ENCODE measurements at regions of chr3 and their contacts with region 1.

Region 1: GRCh38 chr3:122383771-122384697 is at the start of gene FAM162A:
- DNase-seq: peak; percentile 89 to 97 (median 93)
- ATAC-seq: peak; percentile 94
- H3K4me3 ChIP-seq: peak within 1 kb of the TSS; percentile 79 to 91
- H3K4me3 Mint-ChIP-seq: peak within 1 kb of the TSS; percentile 94
- H3K27ac ChIP-seq: peak within 1 kb of the TSS; percentile 73 to 83
- H3K27ac Mint-ChIP-seq: peak within 1 kb of the TSS; percentile 94
- H3K4me1 ChIP-seq: peaks cover 18% of the 10 kb centered on the region
- H3K4me1 Mint-ChIP-seq: peaks cover 51% of the 10 kb centered on the region
- H3K27me3 ChIP-seq: no peaks in the 10 kb centered on the region
- H3K27me3 Mint-ChIP-seq: no peaks in the 10 kb centered on the region
- CTCF ChIP-seq: peak; percentile 66
- total RNA-seq, gene FAM162A: 36.9 to 38.2 TPM

Region 2: DNA sequence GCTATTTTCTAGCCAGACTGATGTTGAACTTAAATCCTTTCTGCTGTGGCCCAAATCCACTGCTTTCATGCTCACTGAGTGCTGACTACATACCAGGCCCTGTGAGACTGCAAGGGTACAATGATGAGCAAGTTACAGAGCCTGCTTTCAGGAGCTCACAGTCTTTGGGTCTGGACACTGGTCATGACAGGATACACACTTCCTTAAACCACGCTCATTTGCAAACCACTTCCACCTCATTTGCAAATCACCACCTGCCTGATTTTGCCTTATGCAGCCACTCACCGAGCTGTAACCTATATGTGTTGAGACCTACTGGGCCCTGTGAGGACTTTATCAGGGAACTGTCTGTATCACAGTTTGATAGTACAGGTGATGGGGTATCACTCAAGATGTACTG is 1984.7 kb before region 1 on chr3:
- CTCF ChIA-PET with region 1: no interaction called
- POLR2A ChIA-PET with region 1: no interaction called
- intact Hi-C with region 1: no loop called
- DNase-seq: no peak
- ATAC-seq: no peak
- H3K4me3 ChIP-seq: no peak overlapping the region
- H3K4me3 Mint-ChIP-seq: no peak overlapping the region
- H3K27ac ChIP-seq: no peak overlapping the region
- H3K27ac Mint-ChIP-seq: no peak overlapping the region
- H3K4me1 ChIP-seq: no peaks in the 10 kb centered on the region
- H3K4me1 Mint-ChIP-seq: no peaks in the 10 kb centered on the region
- H3K27me3 ChIP-seq: no peaks in the 10 kb centered on the region
- H3K27me3 Mint-ChIP-seq: no peaks in the 10 kb centered on the region
- CTCF ChIP-seq: no peak

Region 3: GRCh38 chr3:121660356-121661171 is 723.5 kb before region 1 on chr3 and contains the start of gene HCLS1:
- CTCF ChIA-PET with region 1: no interaction called
- POLR2A ChIA-PET with region 1: interaction called, 10 read pairs
- intact Hi-C with region 1: loop called (anchors 1 to 2 kb)
- DNase-seq: peak; percentile 52 to 90 (median 71)
- ATAC-seq: peak; percentile 83
- H3K4me3 ChIP-seq: peak within 1 kb of the TSS; percentile 58
- H3K4me3 Mint-ChIP-seq: peak within 1 kb of the TSS; percentile 92
- H3K27ac ChIP-seq: peak within 1 kb of the TSS; percentile 86 to 95
- H3K27ac Mint-ChIP-seq: peak within 1 kb of the TSS; percentile 99
- H3K4me1 ChIP-seq: peaks cover 43% of the 10 kb centered on the region
- H3K4me1 Mint-ChIP-seq: peaks cover 54% of the 10 kb centered on the region
- H3K27me3 ChIP-seq: no peaks in the 10 kb centered on the region
- H3K27me3 Mint-ChIP-seq: no peaks in the 10 kb centered on the region
- CTCF ChIP-seq: no peak
- total RNA-seq, gene HCLS1: 162 to 179 TPM

Region 4: DNA sequence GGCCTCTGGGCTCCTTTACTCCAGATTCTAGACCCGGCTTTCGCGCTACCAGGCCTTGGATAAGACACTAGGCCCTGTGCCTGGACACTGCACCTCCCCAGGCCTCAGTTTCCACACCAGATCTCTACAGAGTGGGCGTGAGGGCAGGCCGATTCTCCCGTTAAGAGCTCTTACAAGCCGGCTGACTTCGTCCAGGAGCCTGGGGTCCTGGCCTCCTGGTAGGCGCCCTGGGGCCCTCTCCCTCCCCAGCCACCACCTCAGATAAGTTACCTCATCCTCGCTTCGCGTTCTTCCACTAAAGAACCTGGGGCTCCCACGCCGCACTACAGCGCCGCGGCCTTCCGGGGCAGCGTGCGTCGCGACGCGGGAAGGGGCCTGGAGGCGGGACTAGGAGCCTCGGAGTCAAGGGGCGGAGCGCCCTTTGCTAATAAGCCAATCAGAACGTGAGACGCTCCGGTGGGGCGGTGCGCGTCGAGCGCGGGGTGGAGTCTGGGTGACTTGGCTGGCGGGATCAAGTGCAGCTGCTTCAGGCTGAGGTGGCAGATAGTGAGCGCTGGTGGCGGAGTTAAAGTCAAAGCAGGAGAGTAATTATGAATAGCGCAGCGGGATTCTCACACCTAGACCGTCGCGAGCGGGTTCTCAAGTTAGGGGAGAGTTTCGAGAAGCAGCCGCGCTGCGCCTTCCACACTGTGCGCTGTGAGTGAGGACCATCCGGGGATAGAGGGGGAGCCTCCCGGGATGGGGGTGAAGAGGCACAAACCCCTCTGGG is 549.2 kb before region 1 on chr3 and contains the starts of genes EAF2 and IQCB1:
- CTCF ChIA-PET with region 1: no interaction called
- POLR2A ChIA-PET with region 1: no interaction called
- intact Hi-C with region 1: loop called (anchors 2 to 10 kb)
- DNase-seq: peak; percentile 91 to 98 (median 95)
- ATAC-seq: peak; percentile 97
- H3K4me3 ChIP-seq: peak within 1 kb of the TSS; percentile 74 to 91
- H3K4me3 Mint-ChIP-seq: peak within 1 kb of the TSS; percentile 93
- H3K27ac ChIP-seq: peak within 1 kb of the TSS; percentile 82 to 87
- H3K27ac Mint-ChIP-seq: peak within 1 kb of the TSS; percentile 94
- H3K4me1 ChIP-seq: peaks cover 25% of the 10 kb centered on the region
- H3K4me1 Mint-ChIP-seq: peaks cover 53% of the 10 kb centered on the region
- H3K27me3 ChIP-seq: no peaks in the 10 kb centered on the region
- H3K27me3 Mint-ChIP-seq: no peaks in the 10 kb centered on the region
- CTCF ChIP-seq: no peak
- total RNA-seq, gene EAF2: 3.5 to 3.7 TPM
- total RNA-seq, gene IQCB1: 36.5 to 42.2 TPM

Region 5: DNA sequence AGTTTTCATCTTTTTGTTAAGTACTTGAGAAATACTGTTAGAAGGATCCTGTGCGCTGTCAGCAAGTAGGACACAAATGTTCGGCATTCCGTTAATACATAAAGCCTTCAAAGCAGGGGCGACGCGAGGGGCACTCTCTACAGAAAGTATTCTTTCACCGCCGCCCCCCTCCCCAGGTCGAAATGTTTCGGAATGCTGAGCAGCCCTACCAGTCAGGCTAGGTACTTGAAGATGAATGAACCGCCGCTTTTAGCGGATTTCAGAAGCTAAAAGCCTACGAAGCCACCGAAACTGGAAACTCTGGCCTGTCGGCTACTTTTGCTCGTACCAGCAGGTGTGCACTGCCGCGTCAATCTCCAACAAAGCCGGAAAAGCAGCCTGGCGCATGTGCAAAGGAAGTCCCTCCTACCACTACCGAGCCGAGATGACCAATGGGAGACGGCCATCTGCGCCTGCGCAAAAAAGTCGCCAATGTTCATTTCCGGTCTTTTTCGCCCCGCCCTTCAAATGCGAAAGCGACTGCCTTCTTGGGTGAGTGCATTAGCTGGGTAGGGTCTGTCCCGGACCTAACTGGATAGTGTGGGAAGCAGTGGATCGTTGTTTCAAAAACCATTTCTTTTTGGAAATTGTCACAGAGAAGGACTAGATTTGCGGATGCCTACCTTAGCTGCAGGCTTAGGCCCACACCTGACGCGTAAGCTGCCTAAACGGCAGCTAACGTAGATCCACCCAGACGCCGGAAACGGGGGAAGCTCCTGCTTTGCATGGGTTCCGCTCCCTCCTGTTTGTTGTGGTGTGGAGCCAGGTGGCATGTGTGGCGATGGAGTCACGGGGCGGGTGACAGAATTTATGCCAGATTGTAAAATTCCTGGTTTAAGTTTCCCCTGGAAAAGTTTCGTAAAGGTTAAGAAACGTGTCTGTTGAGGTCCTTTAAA is 32.0 kb after region 1 on chr3 and contains the start of gene WDR5B:
- CTCF ChIA-PET with region 1: interaction called, 8 read pairs
- POLR2A ChIA-PET with region 1: interaction called, 54 read pairs
- intact Hi-C with region 1: loop called (anchors 1 kb)
- DNase-seq: peak; percentile 97 to 99 (median 98)
- ATAC-seq: peak; percentile 88
- H3K4me3 ChIP-seq: peak within 1 kb of the TSS; percentile 71 to 76
- H3K4me3 Mint-ChIP-seq: peak within 1 kb of the TSS; percentile 97
- H3K27ac ChIP-seq: peak within 1 kb of the TSS; percentile 91 to 94
- H3K27ac Mint-ChIP-seq: peak within 1 kb of the TSS; percentile 100
- H3K4me1 ChIP-seq: peaks cover 26% of the 10 kb centered on the region
- H3K4me1 Mint-ChIP-seq: peaks cover 58% of the 10 kb centered on the region
- H3K27me3 ChIP-seq: no peaks in the 10 kb centered on the region
- H3K27me3 Mint-ChIP-seq: no peaks in the 10 kb centered on the region
- CTCF ChIP-seq: no peak
- total RNA-seq, gene WDR5B: 1.9 to 2.7 TPM

Region 6: DNA sequence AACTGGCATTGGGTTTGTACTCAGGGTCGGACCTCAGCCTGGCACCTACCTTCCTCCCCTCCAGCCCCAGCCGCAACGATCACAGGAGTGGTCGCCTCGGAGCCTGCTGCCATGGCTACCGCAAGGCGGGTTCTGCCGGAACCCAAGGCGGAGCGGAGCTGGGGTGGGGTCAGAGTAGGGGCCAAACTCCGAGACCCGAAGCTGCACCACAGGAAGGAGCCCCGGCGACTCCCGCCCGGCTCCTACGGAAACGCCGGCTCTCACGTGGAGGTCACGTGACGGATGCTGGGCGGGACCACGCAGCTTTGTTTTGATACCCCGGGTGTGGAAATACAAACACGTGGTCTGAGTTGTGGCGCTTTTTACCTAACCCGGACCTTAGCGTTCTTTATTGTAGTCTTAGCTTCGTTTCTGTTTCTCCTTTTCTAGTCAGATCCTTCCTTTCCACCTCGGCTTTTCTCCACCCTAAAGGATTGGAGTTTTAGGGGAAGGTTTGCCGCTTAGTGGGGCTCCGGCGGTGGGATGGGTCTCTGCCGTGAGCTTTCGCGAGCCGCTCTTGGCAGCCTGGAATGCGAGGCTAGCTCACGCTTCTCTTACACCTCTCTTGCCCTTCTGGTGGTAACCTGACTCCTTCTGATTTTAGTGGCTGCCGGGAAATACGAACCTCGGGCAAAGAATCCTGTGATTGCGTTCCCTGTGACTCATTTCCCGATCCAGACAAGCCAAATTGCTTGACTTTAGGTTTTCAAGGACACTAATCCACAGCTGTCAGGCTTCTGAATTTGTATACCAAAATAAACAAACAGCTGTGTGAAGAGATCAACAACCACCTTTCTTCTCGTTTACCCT is 409.8 kb after region 1 on chr3 and contains the start of gene HSPBAP1:
- CTCF ChIA-PET with region 1: no interaction called
- POLR2A ChIA-PET with region 1: interaction called, 10 read pairs
- intact Hi-C with region 1: loop called (anchors 1 to 5 kb)
- DNase-seq: peak; percentile 72 to 95 (median 90)
- ATAC-seq: peak; percentile 67
- H3K4me3 ChIP-seq: peak within 1 kb of the TSS; percentile 78 to 81
- H3K4me3 Mint-ChIP-seq: peak within 1 kb of the TSS; percentile 91
- H3K27ac ChIP-seq: peak within 1 kb of the TSS; percentile 77 to 91
- H3K27ac Mint-ChIP-seq: no peak within 1 kb of the TSS
- H3K4me1 ChIP-seq: peaks cover 28% of the 10 kb centered on the region
- H3K4me1 Mint-ChIP-seq: peaks cover 38% of the 10 kb centered on the region
- H3K27me3 ChIP-seq: no peaks in the 10 kb centered on the region
- H3K27me3 Mint-ChIP-seq: no peaks in the 10 kb centered on the region
- CTCF ChIP-seq: no peak
- total RNA-seq, gene HSPBAP1: 8.7 to 9.3 TPM

Region 7: DNA sequence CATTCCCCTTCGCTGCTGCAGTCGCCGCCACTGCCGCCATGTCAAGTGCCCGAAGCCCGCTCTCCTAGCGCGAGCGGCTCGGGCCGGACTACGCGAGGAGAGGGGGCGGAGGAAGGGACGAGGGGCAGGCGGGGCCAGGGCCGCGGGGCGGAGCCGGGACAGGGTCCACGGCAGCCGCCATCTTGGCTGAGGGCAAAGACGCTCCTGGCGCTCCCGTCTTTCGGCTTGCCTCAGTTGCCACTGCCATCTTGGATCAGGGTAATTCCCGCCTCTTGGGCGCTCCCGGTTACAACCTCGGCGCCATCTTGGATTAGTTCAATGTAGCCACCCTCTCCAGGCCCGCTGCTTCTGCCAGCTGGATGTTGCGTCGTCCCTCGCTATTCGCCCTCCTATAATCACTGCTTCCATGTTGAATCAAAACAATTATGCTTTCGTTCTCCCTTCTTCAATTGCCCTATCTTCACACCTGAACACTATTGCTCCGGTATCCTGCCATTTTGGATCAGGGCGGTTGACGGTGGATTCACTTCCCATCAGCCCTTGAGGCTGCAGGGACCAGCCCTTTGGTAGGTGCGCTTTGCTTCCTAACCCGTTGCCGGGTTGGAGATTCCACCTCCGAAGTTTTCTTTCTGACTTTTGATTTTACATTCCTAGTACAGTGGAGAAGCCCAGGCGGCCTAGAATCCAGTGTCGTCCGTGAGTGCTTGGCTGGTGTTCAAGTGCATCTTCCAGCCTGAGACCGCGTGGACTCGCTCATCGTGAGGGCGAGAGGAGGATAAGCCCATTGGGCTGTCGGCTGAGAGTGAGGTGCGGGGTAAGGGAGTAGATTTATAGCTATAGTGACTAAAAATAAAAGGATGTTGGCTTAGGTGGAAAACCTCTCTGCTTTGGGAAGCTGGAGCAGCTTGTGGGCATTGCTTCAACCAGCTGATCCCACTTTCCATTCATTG is 1201.2 kb after region 1 on chr3 and contains the start of gene HACD2:
- CTCF ChIA-PET with region 1: no interaction called
- POLR2A ChIA-PET with region 1: no interaction called
- intact Hi-C with region 1: loop called in 1 of 2 experiments (anchors 2 kb)
- DNase-seq: peak; percentile 88 to 97 (median 95)
- ATAC-seq: peak; percentile 91
- H3K4me3 ChIP-seq: peak within 1 kb of the TSS; percentile 74 to 87
- H3K4me3 Mint-ChIP-seq: no peak within 1 kb of the TSS
- H3K27ac ChIP-seq: peak within 1 kb of the TSS; percentile 62 to 92
- H3K27ac Mint-ChIP-seq: peak within 1 kb of the TSS; percentile 90
- H3K4me1 ChIP-seq: peaks cover 20% of the 10 kb centered on the region
- H3K4me1 Mint-ChIP-seq: peaks cover 20% of the 10 kb centered on the region
- H3K27me3 ChIP-seq: no peaks in the 10 kb centered on the region
- H3K27me3 Mint-ChIP-seq: no peaks in the 10 kb centered on the region
- CTCF ChIP-seq: no peak
- total RNA-seq, gene HACD2: 12.9 to 13.4 TPM